ENCODE measurements at regions of chr6 and their contacts with region 1.

Region 1: DNA sequence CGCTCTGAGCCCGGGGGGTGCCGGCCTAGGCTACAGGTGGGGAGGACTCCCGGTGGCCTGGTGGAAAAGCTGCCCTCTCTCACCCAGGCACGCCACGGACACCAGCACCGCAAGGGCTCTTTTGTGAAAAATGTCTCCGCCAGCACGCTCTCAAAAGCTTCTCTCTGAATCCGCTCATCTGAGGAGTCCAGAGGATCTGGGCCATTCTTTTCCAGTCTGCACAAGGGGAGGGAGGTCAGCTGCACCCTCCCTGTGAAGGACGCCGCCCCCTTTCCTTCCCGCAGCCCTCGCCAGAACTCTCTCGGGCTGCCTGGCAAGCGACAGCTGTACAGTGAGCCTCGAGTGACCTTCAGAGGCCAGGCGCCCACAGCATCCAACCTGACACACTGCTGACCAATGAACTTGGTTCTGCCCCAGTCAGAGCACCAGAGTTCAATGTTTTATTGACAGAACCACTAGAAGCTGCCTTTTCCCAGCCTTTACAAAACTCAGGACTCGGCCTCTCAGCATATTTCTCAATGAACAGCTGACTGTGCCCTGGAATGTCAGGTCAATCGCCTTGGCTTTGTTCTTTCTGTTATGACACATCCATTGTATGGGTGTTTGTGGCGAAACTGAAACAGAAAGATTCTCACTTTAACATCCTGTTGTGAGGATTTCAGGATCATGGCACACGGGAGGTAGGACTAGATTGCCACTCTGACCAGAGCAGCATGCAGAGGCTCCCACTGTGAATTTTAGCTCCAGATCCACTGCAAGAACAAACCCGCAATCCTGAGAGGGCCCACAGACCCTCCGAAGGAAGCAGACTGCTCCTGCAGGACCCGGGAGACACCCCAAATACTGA is 26.7 kb downstream of the SERPINB9 start:
- DNase-seq: no peak
- ATAC-seq: no peak; the same call in 2 of the 3 replicates
- H3K4me3 ChIP-seq: no peak overlapping the region
- H3K27ac ChIP-seq: no peak overlapping the region
- H3K4me1 ChIP-seq: peaks cover 0 to 3% of the 10 kb centered on the region in 2 experiments; a peak in 3 of 5 replicates
- H3K27me3 ChIP-seq: no peaks in the 10 kb centered on the region
- CTCF ChIP-seq: no peak
- EP300 ChIP-seq: no peak
- POLR2A ChIP-seq: no peak
- RAD21 ChIP-seq: no peak

Region 2: GRCh38 chr6:2866181-2866846 is 10.1 kb before region 1 on chr6:
- CTCF ChIA-PET with region 1: no interaction called
- POLR2A ChIA-PET with region 1: interaction called, 21 read pairs
- in situ Hi-C with region 1: no loop called
- intact Hi-C with region 1: no loop called
- DNase-seq: no peak
- ATAC-seq: no peak; the same call in 2 of the 3 replicates
- H3K4me3 ChIP-seq: no peak overlapping the region
- H3K27ac ChIP-seq: no peak overlapping the region
- H3K4me1 ChIP-seq: peaks cover 0 to 7% of the 10 kb centered on the region in 2 experiments; a peak in 1 of 5 replicates
- H3K27me3 ChIP-seq: no peaks in the 10 kb centered on the region
- CTCF ChIP-seq: no peak
- EP300 ChIP-seq: no peak
- POLR2A ChIP-seq: no peak
- RAD21 ChIP-seq: peak in 1 of 2 experiments; percentile 27; a peak in 1 of 4 replicates

Region 3: DNA sequence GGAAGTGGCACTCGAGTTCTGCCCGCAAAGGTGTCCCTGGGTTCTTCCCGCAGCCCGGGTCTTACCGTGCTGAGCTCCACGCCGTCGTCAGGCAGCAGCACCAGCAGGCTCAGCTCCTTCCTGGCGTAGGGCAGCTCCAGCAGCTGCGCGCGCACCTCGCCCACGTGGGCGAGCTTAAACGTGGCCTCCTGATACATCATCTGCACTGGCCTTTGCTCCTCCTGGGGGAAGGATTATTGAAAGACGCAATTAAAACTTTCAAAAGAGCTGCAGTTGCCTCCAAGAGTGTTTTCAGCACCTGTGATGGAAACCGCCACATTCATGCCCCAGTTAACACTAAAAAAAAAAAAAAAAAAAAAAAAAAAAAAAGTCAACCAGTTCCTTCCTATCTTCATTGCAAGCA is 15.3 kb after region 1 on chr6:
- CTCF ChIA-PET with region 1: no interaction called
- POLR2A ChIA-PET with region 1: interaction called, 11 read pairs
- in situ Hi-C with region 1: no loop called
- intact Hi-C with region 1: no loop called
- DNase-seq: no peak
- ATAC-seq: no peak
- H3K4me3 ChIP-seq: no peak overlapping the region
- H3K27ac ChIP-seq: no peak overlapping the region
- H3K4me1 ChIP-seq: no peaks in the 10 kb centered on the region; a peak in 1 of 5 replicates
- H3K27me3 ChIP-seq: no peaks in the 10 kb centered on the region
- CTCF ChIP-seq: no peak
- EP300 ChIP-seq: no peak
- POLR2A ChIP-seq: no peak
- RAD21 ChIP-seq: no peak